ENCODE measurements at regions of chr5 and their contacts with region 1.

Region 1: DNA sequence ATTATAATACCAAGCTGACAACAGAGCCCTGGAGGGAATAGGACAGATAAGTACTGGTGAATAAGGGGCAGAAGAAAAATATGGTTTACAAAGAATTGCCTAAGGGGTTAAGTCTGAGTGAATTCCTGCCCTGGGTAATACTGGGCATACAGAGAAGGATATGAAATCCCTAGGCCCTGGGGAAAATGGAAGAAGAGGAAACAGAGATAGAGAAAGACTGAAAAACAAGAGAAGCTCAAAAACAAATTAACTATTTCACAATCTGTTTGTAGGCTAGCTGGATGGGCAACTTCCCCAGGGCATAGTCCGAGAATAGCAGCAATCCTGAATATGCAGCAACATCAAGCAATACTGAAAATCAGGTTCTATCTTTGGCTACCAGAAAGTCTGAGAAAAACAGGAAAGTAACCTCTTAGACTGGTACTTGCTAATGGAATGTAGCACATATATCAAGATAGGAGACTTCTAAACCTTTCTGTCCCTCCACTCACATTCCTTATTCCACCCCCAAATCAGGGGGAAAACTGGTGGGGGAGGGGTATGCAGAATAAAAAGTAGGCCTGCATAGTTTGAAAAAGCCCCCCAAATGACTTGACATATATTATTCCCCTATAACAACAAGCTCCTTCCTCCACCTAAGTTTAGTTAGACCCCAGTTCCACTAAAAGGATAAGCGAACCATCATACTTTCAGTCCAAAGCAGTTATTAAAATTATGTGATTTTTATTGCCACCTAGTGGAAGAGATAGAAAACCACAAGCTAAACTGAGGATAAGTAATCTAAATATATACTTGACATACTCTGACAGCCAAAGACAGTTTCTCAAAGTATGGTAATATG is 20.6 kb downstream of the SLC38A9 start:
- DNase-seq: peak; percentile 57
- H3K4me3 ChIP-seq: no peak overlapping the region
- H3K27ac ChIP-seq: no peak overlapping the region
- H3K4me1 ChIP-seq: no peaks in the 10 kb centered on the region
- H3K27me3 ChIP-seq: no peaks in the 10 kb centered on the region
- CTCF ChIP-seq: peak; percentile 29 to 32
- POLR2A ChIP-seq: no peak

Region 2: GRCh38 chr5:55187370-55187769 is 504.1 kb before region 1 on chr5:
- CTCF ChIA-PET with region 1: interaction called, 13 read pairs
- POLR2A ChIA-PET with region 1: no interaction called
- dilution Hi-C with region 1: no loop called
- intact Hi-C with region 1: loop called (anchors 5 kb)
- DNase-seq: peak; percentile 27
- H3K4me3 ChIP-seq: no peak overlapping the region
- H3K27ac ChIP-seq: no peak overlapping the region
- H3K4me1 ChIP-seq: no peaks in the 10 kb centered on the region
- H3K27me3 ChIP-seq: peaks cover 34 to 65% of the 10 kb centered on the region in 2 experiments
- CTCF ChIP-seq: no peak
- POLR2A ChIP-seq: no peak

Region 3: DNA sequence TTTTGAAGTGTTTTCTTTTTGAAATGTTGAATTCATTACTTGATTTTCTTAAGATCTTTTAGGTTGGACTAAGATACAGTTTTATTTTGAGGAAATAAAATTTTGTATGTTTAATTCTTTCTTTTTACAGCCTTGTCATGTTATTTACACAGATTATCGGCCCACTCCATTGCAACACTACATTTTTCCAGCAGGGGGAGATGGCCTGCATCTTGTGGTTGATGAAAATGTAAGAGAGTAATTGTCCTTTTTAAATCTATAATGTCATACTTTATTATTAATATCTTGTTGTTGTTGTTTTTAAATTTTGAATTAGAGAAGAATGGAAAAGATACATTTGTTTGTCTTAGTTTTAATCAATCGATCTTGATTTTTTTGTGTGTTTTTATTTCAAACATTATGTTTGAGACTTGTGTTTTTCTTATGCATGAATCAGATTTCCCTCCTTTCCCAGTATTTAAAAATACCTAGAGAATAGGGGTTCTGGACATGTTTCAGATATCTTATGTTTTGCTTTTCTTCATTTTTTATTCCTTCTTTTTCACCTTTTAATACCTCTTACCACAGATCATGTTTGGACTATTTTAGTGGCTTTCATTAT is 347.0 kb before region 1 on chr5:
- CTCF ChIA-PET with region 1: interaction called, 33 read pairs
- POLR2A ChIA-PET with region 1: no interaction called
- dilution Hi-C with region 1: no loop called
- intact Hi-C with region 1: loop called (anchors 1 kb)
- DNase-seq: peak; percentile 86
- H3K4me3 ChIP-seq: no peak overlapping the region
- H3K27ac ChIP-seq: no peak overlapping the region
- H3K4me1 ChIP-seq: peaks cover 3% of the 10 kb centered on the region
- H3K27me3 ChIP-seq: no peaks in the 10 kb centered on the region
- CTCF ChIP-seq: peak; percentile 57 to 66
- POLR2A ChIP-seq: no peak

Region 4: DNA sequence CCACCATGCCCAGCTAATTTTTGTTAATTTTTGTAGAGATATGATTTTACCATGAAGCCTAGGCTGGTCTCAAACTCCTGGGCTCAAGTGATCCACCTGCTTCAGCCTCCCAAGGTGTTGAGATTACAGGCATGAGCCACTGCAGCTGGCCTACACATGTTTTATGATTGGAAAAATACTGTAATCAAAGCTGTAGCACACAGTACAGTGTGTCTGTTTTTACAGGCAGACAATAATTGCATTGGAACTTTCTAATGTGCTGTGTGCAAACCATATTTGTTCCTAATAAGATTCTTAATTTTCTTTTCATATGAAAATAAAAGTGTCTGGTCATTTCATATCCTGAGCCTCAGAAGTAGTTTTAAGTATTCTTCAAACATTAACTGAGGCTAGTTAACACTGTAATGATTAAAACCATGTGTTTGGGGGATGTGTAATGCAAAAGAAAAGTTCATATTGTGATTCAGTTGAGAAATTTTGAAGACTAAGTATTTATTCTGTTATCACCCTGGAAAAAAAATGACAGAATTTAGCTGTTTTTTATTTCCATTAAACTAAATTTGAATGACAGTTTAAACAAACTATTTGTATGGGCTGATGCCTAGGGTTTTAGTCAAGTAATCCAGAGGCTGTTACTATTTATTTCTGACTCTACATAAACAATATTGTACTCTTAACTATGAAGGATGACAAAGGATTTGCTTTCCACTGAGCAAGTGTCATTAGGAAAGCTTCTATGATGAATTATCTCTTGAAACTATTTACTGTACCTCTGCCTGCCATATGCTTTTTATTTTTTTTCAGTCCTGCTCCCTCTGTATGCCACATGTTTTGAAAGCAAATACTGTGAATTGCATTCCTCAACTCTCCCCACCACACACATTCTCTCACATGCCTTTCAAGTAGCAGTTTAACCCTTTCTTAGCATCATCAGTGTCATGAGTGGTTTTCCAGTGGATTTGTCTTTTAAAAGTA is 272.2 kb before region 1 on chr5:
- CTCF ChIA-PET with region 1: interaction called, 21 read pairs
- POLR2A ChIA-PET with region 1: no interaction called
- dilution Hi-C with region 1: no loop called
- intact Hi-C with region 1: no loop called
- DNase-seq: no peak
- H3K4me3 ChIP-seq: no peak overlapping the region
- H3K27ac ChIP-seq: no peak overlapping the region
- H3K4me1 ChIP-seq: no peaks in the 10 kb centered on the region
- H3K27me3 ChIP-seq: no peaks in the 10 kb centered on the region
- CTCF ChIP-seq: no peak
- POLR2A ChIP-seq: no peak

Region 5: DNA sequence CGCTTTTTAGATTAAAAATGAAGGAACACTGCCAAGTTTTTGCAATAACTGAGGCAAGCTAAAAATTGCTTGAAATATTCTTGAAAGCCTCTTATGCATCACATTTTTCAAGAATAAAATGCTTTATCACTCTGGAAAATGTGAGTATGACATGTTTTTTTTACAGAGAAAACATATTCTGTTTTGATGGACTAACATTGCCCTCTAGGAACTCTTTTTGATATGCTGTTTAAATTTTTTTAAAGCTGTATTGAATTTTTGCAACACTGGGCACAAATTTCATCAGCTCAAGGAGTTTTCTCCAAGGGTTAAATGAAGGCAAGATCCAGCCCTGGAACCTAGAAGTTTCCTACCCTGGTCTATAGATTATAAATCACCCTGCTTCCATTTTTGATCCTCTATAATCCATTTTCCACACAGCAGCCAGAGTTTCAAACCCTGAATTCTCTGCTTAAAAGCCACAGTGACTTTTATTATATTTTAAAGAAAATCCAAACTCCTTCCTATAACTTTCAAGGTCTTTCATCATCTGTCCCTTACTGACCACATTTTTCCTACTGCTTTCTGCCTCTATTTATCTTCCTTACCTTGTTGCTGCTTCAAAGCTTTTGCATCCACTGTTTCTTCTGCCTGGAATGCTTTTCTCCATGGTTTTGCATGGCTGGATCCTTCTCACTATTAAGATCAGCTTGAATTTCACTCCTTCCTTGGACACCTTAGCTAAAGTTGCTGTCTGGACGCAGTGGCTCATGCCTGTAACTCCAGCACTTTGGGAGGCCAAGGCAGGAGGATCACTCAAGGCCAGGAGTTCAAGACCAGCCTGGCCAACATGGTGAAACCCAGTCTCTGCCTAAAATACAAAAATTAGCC is 220.5 kb after region 1 on chr5:
- CTCF ChIA-PET with region 1: interaction called, 11 read pairs
- POLR2A ChIA-PET with region 1: no interaction called
- dilution Hi-C with region 1: no loop called
- intact Hi-C with region 1: no loop called
- DNase-seq: no peak
- H3K4me3 ChIP-seq: no peak overlapping the region
- H3K27ac ChIP-seq: no peak overlapping the region
- H3K4me1 ChIP-seq: no peaks in the 10 kb centered on the region
- H3K27me3 ChIP-seq: no peaks in the 10 kb centered on the region
- CTCF ChIP-seq: no peak
- POLR2A ChIP-seq: no peak

Region 6: GRCh38 chr5:56003179-56003578 is 311.7 kb after region 1 on chr5:
- CTCF ChIA-PET with region 1: no interaction called
- POLR2A ChIA-PET with region 1: no interaction called
- dilution Hi-C with region 1: no loop called
- intact Hi-C with region 1: no loop called
- DNase-seq: no peak
- H3K4me3 ChIP-seq: no peak overlapping the region
- H3K27ac ChIP-seq: no peak overlapping the region
- H3K4me1 ChIP-seq: no peaks in the 10 kb centered on the region
- H3K27me3 ChIP-seq: no peaks in the 10 kb centered on the region
- CTCF ChIP-seq: no peak
- POLR2A ChIP-seq: no peak

Measured in endothelial cell of umbilical vein (primary cell).